Dorsolateral prefrontal cortex (tissue), 120 donors: ENCODE measurements at regions of chr16 and their contacts with region 1.

Region 1: DNA sequence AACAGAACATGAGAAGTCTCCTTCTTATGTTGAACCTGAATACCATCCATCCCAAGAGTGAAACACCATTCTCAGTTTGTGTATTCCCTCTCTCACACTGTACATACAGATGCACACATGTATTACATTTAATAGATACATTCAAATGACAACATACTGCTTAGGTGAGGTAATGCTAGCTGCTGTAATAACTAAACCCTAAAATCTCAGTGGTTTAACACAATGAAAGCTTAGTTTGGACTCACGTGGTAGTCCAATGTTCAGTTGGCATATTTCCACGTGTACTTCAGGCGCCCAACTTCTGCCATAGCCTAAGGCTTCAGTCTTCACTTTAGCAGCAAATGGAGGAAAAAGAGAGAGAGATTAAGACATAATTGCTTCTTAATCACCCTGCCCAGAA is 351.1 kb upstream of the PMFBP1 start:
- DNase-seq: no peak
- H3K4me3 ChIP-seq: no peak overlapping the region
- H3K27ac ChIP-seq: no peak overlapping the region
- H3K27me3 ChIP-seq: no peaks in the 10 kb centered on the region
- CTCF ChIP-seq: no peak

Region 2: DNA sequence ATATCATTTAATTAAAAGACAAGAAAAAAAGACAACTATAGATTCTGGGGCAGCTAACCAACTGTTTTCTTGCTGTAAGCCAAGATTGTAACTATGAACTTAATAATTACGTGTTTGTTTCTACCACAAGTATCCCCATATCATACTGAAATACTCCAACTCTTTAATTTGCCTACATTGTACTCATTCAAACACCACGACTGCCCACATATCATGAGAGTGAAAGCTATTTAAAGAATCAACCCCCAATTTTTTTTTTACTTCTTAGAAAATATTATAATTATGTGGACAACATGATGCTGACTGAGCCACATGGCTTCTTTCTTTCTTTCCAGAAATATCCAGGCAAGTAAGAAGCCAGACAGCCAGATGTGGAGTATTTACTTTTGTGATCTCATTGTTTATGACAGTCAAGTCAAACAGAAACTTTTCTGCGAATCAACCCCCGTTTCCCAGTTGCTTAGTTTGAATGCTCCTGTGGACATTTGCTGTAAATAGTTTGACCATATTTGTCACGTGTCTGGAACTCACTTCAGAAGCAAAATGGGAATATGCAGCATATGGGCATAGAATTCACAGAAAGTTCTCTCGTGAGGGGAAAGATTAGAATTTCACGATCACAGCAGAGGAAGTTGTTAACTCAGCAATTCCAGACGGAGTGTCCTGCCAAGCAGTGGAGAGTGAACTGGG is 1646.7 kb after region 1 on chr16:
- intact Hi-C with region 1: loop called in 1 of 2 experiments (anchors 5 kb)
- DNase-seq: no peak
- H3K4me3 ChIP-seq: peak overlapping the region in 2 of 59 donors; percentile 2 to 21
- H3K27ac ChIP-seq: no peak overlapping the region
- H3K27me3 ChIP-seq: no peaks in the 10 kb centered on the region
- CTCF ChIP-seq: no peak